CD14-positive monocyte (primary cell): ENCODE measurements at regions of chr16 and their contacts with region 1.

Region 1: GRCh38 chr16:84262031-84262430 is 22.2 kb upstream of the KCNG4 start:
- DNase-seq: no peak
- H3K4me3 ChIP-seq: no peak overlapping the region
- H3K4me3 Mint-ChIP-seq: no peak overlapping the region
- H3K27ac ChIP-seq: no peak overlapping the region
- H3K27ac Mint-ChIP-seq: no peak overlapping the region
- H3K4me1 ChIP-seq: no peaks in the 10 kb centered on the region
- H3K4me1 Mint-ChIP-seq: no peaks in the 10 kb centered on the region
- H3K27me3 ChIP-seq: no peaks in the 10 kb centered on the region
- H3K27me3 Mint-ChIP-seq: peaks cover 6 to 19% (median 7%) of the 10 kb centered on the region in 3 donors
- CTCF ChIP-seq: no peak

Region 2: DNA sequence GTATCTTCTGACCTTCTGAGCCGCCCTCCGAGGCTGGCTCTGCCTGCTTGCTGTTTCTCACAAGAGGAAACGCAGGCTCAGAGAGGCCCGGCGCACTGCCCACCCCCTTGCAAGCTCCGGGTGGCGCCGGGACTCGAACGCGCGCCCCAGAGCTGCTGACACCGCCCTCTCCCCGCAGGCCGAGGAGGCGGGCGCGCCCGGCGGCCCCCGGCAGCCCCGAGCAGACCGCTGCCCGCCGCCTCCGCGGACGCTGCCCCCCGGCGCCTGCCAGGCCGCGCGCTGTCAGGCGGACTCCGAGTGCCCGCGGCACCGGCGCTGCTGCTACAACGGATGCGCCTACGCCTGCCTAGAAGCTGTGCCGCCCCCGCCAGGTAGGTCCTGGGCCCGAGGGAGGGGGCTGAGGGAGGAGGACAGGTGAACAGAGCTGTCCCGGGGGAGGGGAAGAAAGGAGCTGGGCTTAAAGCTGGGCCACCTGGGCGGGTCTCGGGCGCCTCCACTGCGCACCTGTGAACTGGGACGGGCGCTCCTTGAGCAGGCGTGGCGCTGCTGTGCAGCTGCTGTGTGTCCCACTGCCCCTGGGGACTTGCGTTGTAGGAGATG is 50.9 kb after region 1 on chr16:
- intact Hi-C with region 1: loop called in 1 of 2 experiments (anchors 2 kb)
- DNase-seq: no peak
- H3K4me3 ChIP-seq: no peak overlapping the region
- H3K4me3 Mint-ChIP-seq: peak overlapping the region in 1 of 2 donors; percentile 36
- H3K27ac ChIP-seq: no peak overlapping the region
- H3K27ac Mint-ChIP-seq: no peak overlapping the region
- H3K4me1 ChIP-seq: no peaks in the 10 kb centered on the region
- H3K4me1 Mint-ChIP-seq: no peaks in the 10 kb centered on the region
- H3K27me3 ChIP-seq: peaks cover 5 to 25% of the 10 kb centered on the region in 2 donors
- H3K27me3 Mint-ChIP-seq: peaks cover 33 to 47% (median 39%) of the 10 kb centered on the region in 3 donors
- CTCF ChIP-seq: no peak